IMR-90 (cell line): ENCODE measurements at regions of chr9 and their contacts with region 1.

Region 1: GRCh38 chr9:20854444-20854843 is 170.4 kb downstream of the FOCAD start:
- DNase-seq: peak; percentile 88
- ATAC-seq: peak; percentile 95
- H3K4me3 ChIP-seq: no peak overlapping the region
- H3K27ac ChIP-seq: no peak overlapping the region
- H3K4me1 ChIP-seq: no peaks in the 10 kb centered on the region; the same call in 1 of the 2 replicates
- H3K27me3 ChIP-seq: no peaks in the 10 kb centered on the region
- CTCF ChIP-seq: no peak
- POLR2A ChIP-seq: no peak
- RAD21 ChIP-seq: no peak

Region 2: GRCh38 chr9:22285066-22285465 is 1430.6 kb after region 1 on chr9:
- CTCF ChIA-PET with region 1: no interaction called
- POLR2A ChIA-PET with region 1: no interaction called
- dilution Hi-C with region 1: no loop called
- in situ Hi-C with region 1: no loop called
- intact Hi-C with region 1: loop called (anchors 5 kb)
- DNase-seq: no peak
- ATAC-seq: no peak
- H3K4me3 ChIP-seq: no peak overlapping the region
- H3K27ac ChIP-seq: no peak overlapping the region
- H3K4me1 ChIP-seq: no peaks in the 10 kb centered on the region
- H3K27me3 ChIP-seq: peaks cover 2% of the 10 kb centered on the region
- CTCF ChIP-seq: no peak
- POLR2A ChIP-seq: no peak
- RAD21 ChIP-seq: no peak